Aorta (tissue), 5 donors: ENCODE measurements at regions of chr5 and their contacts with region 1.

Region 1: GRCh38 chr5:169923988-169924387 is 56.3 kb downstream of the INSYN2B start:
- DNase-seq: no peak
- ATAC-seq: no peak
- H3K4me3 ChIP-seq: no peak overlapping the region
- H3K27ac ChIP-seq: no peak overlapping the region
- H3K4me1 ChIP-seq: no peaks in the 10 kb centered on the region
- H3K27me3 ChIP-seq: no peaks in the 10 kb centered on the region

Region 2: GRCh38 chr5:169934990-169935389 is 11.0 kb after region 1 on chr5:
- intact Hi-C with region 1: loop called in 1 of 2 experiments (anchors 1 kb)
- DNase-seq: no peak
- ATAC-seq: no peak
- H3K4me3 ChIP-seq: no peak overlapping the region
- H3K27ac ChIP-seq: no peak overlapping the region
- H3K4me1 ChIP-seq: no peaks in the 10 kb centered on the region
- H3K27me3 ChIP-seq: no peaks in the 10 kb centered on the region

Region 3: DNA sequence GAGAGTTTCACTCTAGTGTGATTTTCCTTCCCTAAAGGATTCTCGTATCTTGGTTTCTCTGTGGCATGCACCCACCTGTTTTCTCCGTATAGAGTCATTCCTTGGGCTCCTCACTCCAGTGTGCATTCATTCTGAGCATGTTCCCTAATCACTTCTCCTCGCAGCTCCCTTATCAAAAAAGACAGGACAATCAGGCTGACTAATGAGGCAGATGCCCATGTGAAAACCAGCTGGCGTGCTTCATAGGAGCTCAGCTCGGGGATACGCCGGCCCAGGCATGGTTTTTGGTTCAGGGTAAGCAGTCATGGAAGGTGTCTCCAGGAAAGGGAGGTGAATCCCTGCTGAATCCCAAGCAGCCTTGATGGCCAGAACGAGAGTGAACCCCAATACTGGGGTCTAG is 97.5 kb after region 1 on chr5:
- intact Hi-C with region 1: no loop called
- DNase-seq: no peak
- ATAC-seq: no peak
- H3K4me3 ChIP-seq: no peak overlapping the region
- H3K27ac ChIP-seq: no peak overlapping the region
- H3K4me1 ChIP-seq: no peaks in the 10 kb centered on the region
- H3K27me3 ChIP-seq: no peaks in the 10 kb centered on the region